MCF 10A (cell line): ENCODE measurements at regions of chr11 and their contacts with region 1.

Region 1: DNA sequence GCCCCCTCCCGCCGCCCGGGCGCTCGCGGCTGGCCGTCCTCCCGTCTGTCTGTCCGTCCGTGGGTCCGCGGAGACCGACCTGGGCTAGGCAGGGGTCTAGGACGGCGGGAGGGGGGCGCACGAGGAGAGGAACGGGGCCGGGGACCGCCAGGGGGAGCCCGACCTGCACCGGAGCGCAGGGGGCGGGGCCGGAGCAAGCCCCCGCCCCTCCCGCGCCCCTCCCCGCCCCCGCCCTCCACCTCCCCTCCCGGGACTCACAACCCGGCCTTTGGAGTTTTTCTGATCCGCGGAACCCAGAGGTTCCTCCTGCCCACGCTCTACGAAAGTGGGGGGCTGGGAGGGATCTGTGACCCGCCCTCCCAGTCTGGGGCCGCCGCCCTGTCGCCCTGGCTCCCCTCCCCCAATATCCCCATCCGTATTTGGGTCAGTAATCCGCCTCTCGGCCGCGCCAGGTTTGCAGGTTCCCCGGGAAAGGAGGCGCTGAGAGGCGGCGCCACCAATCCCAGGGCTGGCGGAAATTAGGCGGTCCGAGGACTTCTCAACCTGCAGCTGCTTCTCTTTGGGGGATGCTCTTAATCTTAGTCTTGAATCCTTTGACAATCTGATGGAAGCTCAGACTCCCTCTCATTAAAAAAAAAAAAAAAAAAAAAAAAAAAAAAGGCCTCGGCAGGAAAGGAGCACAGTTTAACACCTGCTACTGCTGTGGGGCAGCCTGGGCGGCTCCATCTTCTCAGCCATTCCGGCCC is 925 bp upstream of the KCNJ11 start:
- DNase-seq: peak; percentile 74
- H3K4me3 Mint-ChIP-seq: peak overlapping the region; percentile 71
- H3K27ac Mint-ChIP-seq: no peak overlapping the region
- H3K4me1 Mint-ChIP-seq: no peaks in the 10 kb centered on the region
- H3K27me3 Mint-ChIP-seq: no peaks in the 10 kb centered on the region
- CTCF ChIP-seq: peak; percentile 91

Region 2: GRCh38 chr11:17036666-17037542 is 352.5 kb before region 1 on chr11:
- CTCF ChIA-PET with region 1: no interaction called
- POLR2A ChIA-PET with region 1: no interaction called
- intact Hi-C with region 1: no loop called
- DNase-seq: peak; percentile 19
- H3K4me3 Mint-ChIP-seq: no peak overlapping the region
- H3K27ac Mint-ChIP-seq: no peak overlapping the region
- H3K4me1 Mint-ChIP-seq: no peaks in the 10 kb centered on the region
- H3K27me3 Mint-ChIP-seq: no peaks in the 10 kb centered on the region
- CTCF ChIP-seq: no peak

Region 3: GRCh38 chr11:17276236-17277023 is 113.0 kb before region 1 on chr11 and contains the start of gene NUCB2:
- CTCF ChIA-PET with region 1: no interaction called
- POLR2A ChIA-PET with region 1: no interaction called
- intact Hi-C with region 1: no loop called
- DNase-seq: peak; percentile 96
- H3K4me3 Mint-ChIP-seq: peak within 1 kb of the TSS; percentile 98
- H3K27ac Mint-ChIP-seq: peak within 1 kb of the TSS; percentile 77
- H3K4me1 Mint-ChIP-seq: peaks cover 9% of the 10 kb centered on the region
- H3K27me3 Mint-ChIP-seq: no peaks in the 10 kb centered on the region
- CTCF ChIP-seq: no peak
- total RNA-seq, gene NUCB2: 89.4 and 137 TPM in 2 replicates

Region 4: GRCh38 chr11:17328871-17329494 is 60.4 kb before region 1 on chr11:
- CTCF ChIA-PET with region 1: no interaction called
- POLR2A ChIA-PET with region 1: no interaction called
- intact Hi-C with region 1: no loop called
- DNase-seq: no peak
- H3K4me3 Mint-ChIP-seq: no peak overlapping the region
- H3K27ac Mint-ChIP-seq: no peak overlapping the region
- H3K4me1 Mint-ChIP-seq: no peaks in the 10 kb centered on the region
- H3K27me3 Mint-ChIP-seq: no peaks in the 10 kb centered on the region
- CTCF ChIP-seq: no peak

Region 5: DNA sequence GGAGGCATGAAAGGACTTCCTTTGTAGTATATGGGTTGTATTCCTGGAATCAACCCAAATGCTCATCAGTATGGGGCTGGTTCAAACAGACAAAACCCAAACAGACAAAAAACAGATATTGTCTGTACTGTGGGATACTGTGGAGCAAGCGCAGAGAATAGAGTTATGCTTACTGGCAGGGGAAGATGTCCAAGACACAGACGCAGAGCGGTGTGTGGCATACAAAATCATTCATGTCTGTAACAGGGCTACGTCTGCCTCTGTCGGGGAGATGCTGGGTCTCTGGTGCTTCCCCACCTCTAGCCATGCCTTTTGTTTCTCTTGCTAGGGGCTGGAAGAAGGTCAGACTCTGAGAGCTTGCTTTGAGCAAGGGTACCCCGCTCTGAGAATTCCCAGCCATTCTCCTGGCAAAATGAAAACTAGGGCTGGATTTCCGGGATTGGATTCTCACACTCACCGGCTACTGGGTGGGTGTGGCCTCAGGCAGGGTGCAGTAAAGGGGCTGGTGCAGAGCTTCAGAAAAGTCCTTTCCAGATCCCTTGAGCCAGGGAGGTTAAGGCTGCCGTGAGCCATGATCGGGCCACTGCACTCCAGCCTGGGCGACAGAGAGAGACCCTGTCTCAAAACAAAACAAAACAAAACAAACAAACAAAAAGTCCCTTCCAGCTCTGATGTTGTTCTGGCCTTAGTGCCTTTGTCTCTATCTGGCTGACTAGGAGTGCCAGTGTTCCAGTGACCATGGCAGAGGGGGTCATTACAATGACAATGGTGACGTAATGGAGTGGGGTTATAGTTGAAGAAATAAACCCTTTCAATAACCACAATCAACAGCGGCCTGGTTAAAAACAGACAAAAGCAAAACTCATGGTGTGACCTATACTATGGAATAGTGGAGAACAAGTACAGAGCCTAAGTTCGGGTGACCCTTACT is 90.2 kb after region 1 on chr11:
- CTCF ChIA-PET with region 1: no interaction called
- POLR2A ChIA-PET with region 1: no interaction called
- intact Hi-C with region 1: loop called (anchors 1 kb)
- DNase-seq: peak; percentile 49
- H3K4me3 Mint-ChIP-seq: peak overlapping the region; percentile 35
- H3K27ac Mint-ChIP-seq: no peak overlapping the region
- H3K4me1 Mint-ChIP-seq: no peaks in the 10 kb centered on the region
- H3K27me3 Mint-ChIP-seq: peaks cover 36% of the 10 kb centered on the region
- CTCF ChIP-seq: no peak